HepG2 (cell line): ENCODE measurements at regions of chr1 and their contacts with region 1.

Region 1: DNA sequence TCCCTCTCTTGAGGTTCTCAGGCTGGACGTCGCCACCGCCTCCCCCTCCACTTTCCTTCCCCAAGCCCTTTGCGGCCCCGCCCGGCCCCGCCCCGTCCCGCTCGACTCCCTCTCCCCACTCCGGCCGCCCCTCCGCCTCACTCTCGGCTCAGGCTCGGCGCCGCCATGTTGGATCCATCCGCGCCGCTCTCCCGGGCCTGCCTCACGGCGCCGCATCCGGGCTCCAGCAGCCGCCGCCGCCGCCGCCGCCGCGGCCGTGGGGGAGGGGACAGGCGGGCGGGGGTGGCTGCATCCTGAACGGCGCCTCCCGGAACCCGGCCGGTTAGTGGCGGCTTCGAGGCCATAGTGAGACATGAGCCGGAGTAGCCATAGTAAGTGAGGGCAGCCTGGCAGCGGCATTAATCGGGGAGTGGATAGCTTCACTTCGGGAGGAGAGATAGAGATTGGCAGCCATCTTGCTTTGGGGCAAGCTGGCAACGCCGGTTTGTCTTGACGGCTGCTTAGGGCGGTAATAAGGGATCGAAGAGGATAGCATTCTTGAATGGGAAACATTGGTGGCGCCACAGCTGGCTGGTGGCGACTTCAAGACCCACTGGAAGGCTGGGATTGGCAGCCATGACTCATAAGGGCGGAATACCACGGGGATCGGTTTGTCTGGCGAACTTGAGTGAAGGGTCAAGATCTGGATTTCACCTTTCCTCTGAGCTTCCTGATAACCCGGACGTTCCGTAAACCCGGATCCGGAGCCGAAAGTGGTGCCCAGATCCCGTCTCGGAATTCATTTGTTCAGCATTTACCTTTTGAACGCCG is at the start of gene DEDD:
- DNase-seq: peak; percentile 92
- ATAC-seq: peak; percentile 96
- H3K4me3 ChIP-seq: peak within 1 kb of the TSS; percentile 79 to 82 (median 80)
- H3K27ac ChIP-seq: peak within 1 kb of the TSS; percentile 90
- H3K4me1 ChIP-seq: peaks cover 27% of the 10 kb centered on the region
- H3K27me3 ChIP-seq: no peaks in the 10 kb centered on the region; a peak in 1 of 5 replicates
- CTCF ChIP-seq: peak; percentile 43; the same call in 1 of the 2 replicates
- EP300 ChIP-seq: no peak
- POLR2A ChIP-seq: peak in 1 of 2 experiments; percentile 51; a peak in 2 of 4 replicates
- RAD21 ChIP-seq: no peak
- total RNA-seq, gene DEDD: 12.6 and 14.0 TPM in 2 replicates

Region 2: GRCh38 chr1:160997323-160998038 is 135.1 kb before region 1 on chr1:
- CTCF ChIA-PET with region 1: no interaction called
- POLR2A ChIA-PET with region 1: no interaction called
- in situ Hi-C with region 1: no loop called
- intact Hi-C with region 1: loop called (anchors 10 kb)
- DNase-seq: peak; percentile 61
- ATAC-seq: peak; percentile 95
- H3K4me3 ChIP-seq: no peak overlapping the region
- H3K27ac ChIP-seq: no peak overlapping the region
- H3K4me1 ChIP-seq: peaks cover 11% of the 10 kb centered on the region
- H3K27me3 ChIP-seq: no peaks in the 10 kb centered on the region
- CTCF ChIP-seq: peak; percentile 84
- EP300 ChIP-seq: no peak
- POLR2A ChIP-seq: no peak
- RAD21 ChIP-seq: peak; percentile 49; the same call in 1 of the 2 replicates

Region 3: DNA sequence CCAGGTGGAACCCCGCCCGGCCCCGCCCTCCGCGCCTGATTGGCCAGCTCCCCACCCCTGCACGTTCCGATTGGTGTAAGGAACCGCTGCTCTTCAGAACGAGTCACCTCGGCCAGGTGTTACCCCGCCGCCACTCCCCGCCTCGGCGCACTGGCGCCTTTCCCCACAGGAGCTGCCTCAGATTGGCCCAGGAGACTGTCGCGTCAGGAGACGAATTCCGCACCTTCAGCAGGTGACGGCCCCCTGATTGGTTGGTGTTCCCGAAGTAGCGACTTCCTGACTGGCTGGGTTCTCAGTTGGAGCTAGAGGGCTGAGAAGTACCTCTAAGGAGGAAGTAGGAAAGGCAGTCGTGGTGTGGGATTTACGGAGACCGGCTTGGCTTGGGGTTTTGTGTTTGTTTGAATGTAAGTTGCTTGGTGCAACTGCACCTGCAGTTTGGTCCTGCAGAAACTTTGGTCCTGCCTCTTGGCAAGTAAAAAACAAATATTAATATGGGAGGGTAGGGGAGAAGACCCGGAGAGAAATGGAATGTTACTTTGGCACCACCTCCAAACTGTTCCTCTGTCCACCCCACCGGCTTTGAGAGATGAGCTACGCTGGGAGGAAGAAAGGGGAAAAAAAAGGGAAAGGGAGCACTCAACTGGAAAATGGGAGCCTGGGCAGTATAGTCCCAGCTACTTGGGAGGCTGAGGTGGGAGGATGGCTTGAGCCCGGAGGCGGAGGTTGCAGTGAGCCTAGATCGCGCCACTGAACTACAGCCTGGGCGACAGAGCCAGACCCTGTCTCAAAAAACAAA is 111.3 kb before region 1 on chr1:
- CTCF ChIA-PET with region 1: no interaction called
- POLR2A ChIA-PET with region 1: interaction called, 10 read pairs
- in situ Hi-C with region 1: no loop called
- intact Hi-C with region 1: no loop called
- DNase-seq: peak; percentile 88
- ATAC-seq: peak; percentile 91
- H3K4me3 ChIP-seq: peak overlapping the region; percentile 64 to 87 (median 84)
- H3K27ac ChIP-seq: peak overlapping the region; percentile 75
- H3K4me1 ChIP-seq: peaks cover 51% of the 10 kb centered on the region
- H3K27me3 ChIP-seq: no peaks in the 10 kb centered on the region; a peak in 1 of 5 replicates
- CTCF ChIP-seq: no peak
- EP300 ChIP-seq: no peak
- POLR2A ChIP-seq: peak; percentile 54 to 79
- RAD21 ChIP-seq: no peak

Region 4: GRCh38 chr1:161045750-161046571 is 86.7 kb before region 1 on chr1 and contains the start of gene USF1:
- CTCF ChIA-PET with region 1: no interaction called
- POLR2A ChIA-PET with region 1: interaction called, 14 read pairs
- in situ Hi-C with region 1: no loop called
- intact Hi-C with region 1: no loop called
- DNase-seq: peak; percentile 92
- ATAC-seq: peak; percentile 85
- H3K4me3 ChIP-seq: peak within 1 kb of the TSS; percentile 78 to 84 (median 79)
- H3K27ac ChIP-seq: peak within 1 kb of the TSS; percentile 94
- H3K4me1 ChIP-seq: peaks cover 20% of the 10 kb centered on the region
- H3K27me3 ChIP-seq: no peaks in the 10 kb centered on the region; a peak in 2 of 5 replicates
- CTCF ChIP-seq: peak; percentile 14; the same call in 1 of the 2 replicates
- EP300 ChIP-seq: peak in 1 of 2 experiments; percentile 11; a peak in 1 of 4 replicates
- POLR2A ChIP-seq: peak; percentile 77 to 86
- RAD21 ChIP-seq: no peak
- total RNA-seq, gene USF1: 32.2 and 39.4 TPM in 2 replicates

Region 5: GRCh38 chr1:161098210-161099068 is 34.2 kb before region 1 on chr1 and contains the start of gene KLHDC9:
- CTCF ChIA-PET with region 1: no interaction called
- POLR2A ChIA-PET with region 1: interaction called, 11 read pairs
- in situ Hi-C with region 1: no loop called
- intact Hi-C with region 1: no loop called
- DNase-seq: peak; percentile 87
- ATAC-seq: peak; percentile 93
- H3K4me3 ChIP-seq: peak within 1 kb of the TSS; percentile 60 to 90 (median 87)
- H3K27ac ChIP-seq: peak within 1 kb of the TSS; percentile 41
- H3K4me1 ChIP-seq: peaks cover 7% of the 10 kb centered on the region
- H3K27me3 ChIP-seq: peaks cover 0 to 3% of the 10 kb centered on the region in 2 experiments; a peak in 1 of 5 replicates
- CTCF ChIP-seq: peak; percentile 50
- EP300 ChIP-seq: no peak
- POLR2A ChIP-seq: no peak
- RAD21 ChIP-seq: no peak; the same call in 1 of the 2 replicates
- total RNA-seq, gene KLHDC9: 2.9 and 4.0 TPM in 2 replicates

Region 6: DNA sequence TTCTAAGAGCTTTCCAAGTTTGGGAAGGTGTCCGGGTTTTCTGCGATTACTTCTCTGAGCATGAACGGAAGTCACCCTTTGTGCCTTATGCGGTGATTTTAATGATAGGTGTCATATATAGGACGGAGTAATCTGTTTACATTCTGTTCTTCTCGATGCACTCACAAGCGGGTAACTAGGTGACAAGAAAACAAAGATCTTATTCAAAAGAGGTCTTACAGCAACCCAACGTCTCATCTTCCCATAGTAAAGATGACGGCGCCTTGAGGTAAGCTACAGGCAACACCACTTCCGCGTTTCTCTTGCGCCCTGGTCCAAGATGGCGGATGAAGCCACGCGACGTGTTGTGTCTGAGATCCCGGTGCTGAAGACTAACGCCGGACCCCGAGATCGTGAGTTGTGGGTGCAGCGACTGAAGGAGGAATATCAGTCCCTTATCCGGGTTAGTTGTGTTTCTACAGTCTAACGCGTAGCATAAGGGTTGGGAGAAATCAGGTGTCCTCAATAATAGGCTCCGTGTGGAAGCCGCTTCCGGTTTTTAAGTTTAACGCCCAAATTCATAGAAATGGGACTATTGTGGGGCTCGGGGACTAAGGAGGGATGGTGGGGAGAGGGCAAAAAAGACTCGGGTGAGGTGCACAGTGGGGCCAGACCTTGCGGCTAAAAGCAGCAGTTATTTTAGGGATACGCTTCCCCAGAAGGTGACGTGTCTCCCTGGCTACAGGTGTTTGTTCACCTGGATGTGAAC is 21.2 kb after region 1 on chr1 and contains the start of gene UFC1:
- CTCF ChIA-PET with region 1: no interaction called
- POLR2A ChIA-PET with region 1: interaction called, 43 read pairs
- in situ Hi-C with region 1: no loop called
- intact Hi-C with region 1: loop called (anchors 2 kb)
- DNase-seq: peak; percentile 86
- ATAC-seq: peak; percentile 95
- H3K4me3 ChIP-seq: peak within 1 kb of the TSS; percentile 78 to 85 (median 78)
- H3K27ac ChIP-seq: peak within 1 kb of the TSS; percentile 99
- H3K4me1 ChIP-seq: peaks cover 24% of the 10 kb centered on the region
- H3K27me3 ChIP-seq: no peaks in the 10 kb centered on the region; a peak in 1 of 5 replicates
- CTCF ChIP-seq: no peak
- EP300 ChIP-seq: no peak
- POLR2A ChIP-seq: peak; percentile 77 to 93
- RAD21 ChIP-seq: no peak
- total RNA-seq, gene UFC1: 72.8 and 96.5 TPM in 2 replicates

Region 7: DNA sequence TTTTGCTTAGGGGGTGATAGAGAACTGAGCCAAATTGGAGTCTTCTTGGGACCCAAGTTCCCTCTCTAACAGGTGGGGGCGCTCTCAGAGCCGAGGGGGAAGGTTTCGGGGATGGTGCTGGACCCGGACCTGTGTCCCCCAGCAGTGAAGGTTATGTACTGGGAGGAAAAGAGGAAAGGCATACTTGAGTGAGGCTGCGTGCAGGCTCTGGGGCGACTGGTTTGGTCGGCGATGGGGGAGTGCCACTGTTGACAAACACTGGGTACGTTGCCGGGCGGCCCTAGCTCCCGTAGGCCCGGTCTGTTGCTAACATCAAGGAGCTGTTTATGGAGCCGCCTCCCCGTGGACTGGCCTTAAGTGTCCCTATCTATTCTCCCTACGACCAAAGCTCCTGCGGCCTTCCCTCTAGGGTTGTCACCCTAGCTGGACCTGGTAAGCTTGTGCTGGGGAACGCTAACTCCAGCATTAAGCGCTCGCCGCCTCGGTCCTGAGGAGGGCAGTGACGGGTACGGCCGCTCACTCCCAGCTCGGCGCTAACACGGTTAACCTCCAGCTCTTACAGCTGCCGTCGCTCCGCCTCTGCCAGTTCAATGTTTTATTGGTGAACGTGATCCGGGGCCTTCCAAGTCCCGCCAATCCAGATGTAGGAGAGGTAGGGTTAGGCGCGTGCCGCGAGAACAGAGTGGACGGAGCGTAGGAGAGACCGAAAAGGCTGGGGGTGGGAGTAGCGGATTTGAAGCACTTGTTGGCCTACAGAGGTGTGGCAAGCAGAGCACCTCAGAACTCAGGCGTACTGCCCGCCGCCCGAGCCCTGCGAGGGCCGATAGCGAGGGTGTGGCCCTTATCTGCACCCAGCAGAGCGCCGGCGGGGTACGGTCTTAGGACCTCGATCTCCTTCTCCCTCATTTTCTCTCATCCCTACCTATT is 33.4 kb after region 1 on chr1 and contains the start of gene PPOX:
- CTCF ChIA-PET with region 1: no interaction called
- POLR2A ChIA-PET with region 1: interaction called, 11 read pairs
- in situ Hi-C with region 1: no loop called
- intact Hi-C with region 1: no loop called
- DNase-seq: peak; percentile 97
- ATAC-seq: peak; percentile 96
- H3K4me3 ChIP-seq: peak within 1 kb of the TSS; percentile 71 to 88 (median 74)
- H3K27ac ChIP-seq: peak within 1 kb of the TSS; percentile 62
- H3K4me1 ChIP-seq: peaks cover 25% of the 10 kb centered on the region
- H3K27me3 ChIP-seq: no peaks in the 10 kb centered on the region
- CTCF ChIP-seq: peak; percentile 61
- EP300 ChIP-seq: 0 out of 4 replicates have a peak, but pooled peaks of 1 of the 2 experiments have one; percentile 10
- POLR2A ChIP-seq: peak; percentile 69 to 79
- RAD21 ChIP-seq: no peak
- total RNA-seq, gene PPOX: 13.0 and 15.5 TPM in 2 replicates